ENCODE measurements at regions of chr20 and their contacts with region 1.

Region 1: GRCh38 chr20:46520976-46521579 is 7.7 kb upstream of the ZNF334 start:
- DNase-seq: peak; percentile 42
- H3K4me3 ChIP-seq: no peak overlapping the region
- H3K27ac ChIP-seq: no peak overlapping the region
- H3K4me1 ChIP-seq: no peaks in the 10 kb centered on the region
- H3K27me3 ChIP-seq: no peaks in the 10 kb centered on the region
- CTCF ChIP-seq: peak; percentile 65 to 89

Region 2: DNA sequence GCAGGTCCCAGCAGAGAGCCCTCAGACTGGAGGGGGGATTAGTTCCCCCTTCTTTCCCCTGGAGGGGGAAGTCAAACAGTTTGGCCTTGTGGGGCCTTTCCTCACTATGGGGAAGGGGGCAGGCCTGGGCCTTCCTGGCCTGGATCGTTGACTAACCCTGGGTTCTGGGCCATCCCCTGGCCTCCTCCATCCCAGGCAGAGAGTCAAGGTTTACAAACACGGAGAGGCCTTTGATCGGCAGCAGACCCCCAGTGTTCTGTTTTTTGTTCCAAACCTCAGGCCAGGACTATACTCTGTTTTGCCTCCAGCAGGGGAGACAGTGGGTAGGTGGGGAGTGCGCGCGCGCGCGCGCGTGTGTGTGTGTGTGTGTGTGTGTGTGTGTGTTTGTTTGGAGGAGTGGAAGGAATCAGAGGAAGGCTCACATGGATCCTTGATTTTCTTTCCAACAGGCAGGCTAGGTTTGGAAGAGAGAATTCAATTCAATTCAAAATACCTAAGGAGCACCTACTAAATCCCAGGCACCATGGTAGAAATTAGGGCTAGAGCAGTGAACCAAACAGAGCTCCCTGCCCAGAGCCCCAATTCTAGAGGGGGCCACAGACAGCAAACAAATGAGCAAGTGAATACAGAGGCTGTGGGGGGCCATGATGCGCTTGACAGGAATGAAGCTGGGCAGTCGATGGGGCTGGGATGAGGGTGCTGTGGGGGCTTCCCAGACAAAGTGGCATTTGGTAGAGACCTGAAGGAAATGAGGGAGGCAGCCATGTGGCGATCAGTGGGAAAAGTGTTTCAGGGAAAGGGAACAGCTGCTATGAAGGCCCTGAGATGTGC is 153.4 kb after region 1 on chr20:
- CTCF ChIA-PET with region 1: no interaction called
- dilution Hi-C with region 1: no loop called
- in situ Hi-C with region 1: loop called in 1 of 2 experiments (anchors 5 kb)
- intact Hi-C with region 1: no loop called
- DNase-seq: no peak
- H3K4me3 ChIP-seq: no peak overlapping the region
- H3K27ac ChIP-seq: no peak overlapping the region
- H3K4me1 ChIP-seq: no peaks in the 10 kb centered on the region
- H3K27me3 ChIP-seq: no peaks in the 10 kb centered on the region
- CTCF ChIP-seq: no peak

Region 3: DNA sequence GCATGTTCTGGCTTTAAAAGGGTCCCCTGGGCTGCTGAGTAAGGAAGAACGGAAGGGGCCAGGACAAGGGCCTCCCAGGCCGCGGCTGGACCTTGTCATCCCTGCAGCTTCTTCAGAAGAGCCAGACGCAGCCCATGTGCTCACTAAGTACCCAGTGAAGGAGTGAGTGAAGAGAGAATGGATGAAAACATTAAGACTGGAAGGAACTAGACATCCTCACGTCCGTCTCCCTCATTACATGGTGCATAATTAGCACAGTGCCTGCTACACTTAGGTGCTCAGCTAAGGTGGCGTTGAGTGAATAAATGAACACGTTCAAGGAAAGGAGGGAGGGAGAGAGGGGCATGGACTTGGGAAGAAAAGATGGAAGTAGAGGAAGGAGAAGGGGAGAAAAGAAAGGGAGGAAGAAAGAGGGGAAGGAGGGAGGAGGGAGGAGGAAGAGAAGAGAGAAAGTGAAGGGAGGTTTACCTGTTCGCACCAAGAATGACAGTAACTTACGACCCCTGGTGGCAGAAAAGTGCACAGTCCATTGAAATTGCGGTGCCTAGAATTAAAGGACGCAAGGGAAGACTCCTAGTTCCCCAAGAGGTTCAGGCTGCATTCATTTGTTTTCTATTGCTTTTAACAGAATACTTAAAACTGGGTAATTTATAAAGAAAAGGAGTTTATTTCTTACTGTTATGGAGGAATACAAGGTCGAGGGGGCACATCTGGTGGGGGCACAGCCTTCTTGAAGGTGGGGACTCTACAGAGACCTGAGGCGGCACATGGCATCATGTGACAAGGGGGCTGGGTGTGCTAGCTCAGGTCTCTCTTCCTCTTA is 160.2 kb after region 1 on chr20:
- CTCF ChIA-PET with region 1: interaction called, 12 read pairs
- dilution Hi-C with region 1: no loop called
- in situ Hi-C with region 1: loop called (anchors 5 kb)
- intact Hi-C with region 1: loop called (anchors 1 kb)
- DNase-seq: peak; percentile 48
- H3K4me3 ChIP-seq: no peak overlapping the region
- H3K27ac ChIP-seq: no peak overlapping the region
- H3K4me1 ChIP-seq: peaks cover 7% of the 10 kb centered on the region
- H3K27me3 ChIP-seq: no peaks in the 10 kb centered on the region
- CTCF ChIP-seq: peak; percentile 83 to 90

Region 4: GRCh38 chr20:46699651-46700359 is 178.7 kb after region 1 on chr20:
- CTCF ChIA-PET with region 1: no interaction called
- dilution Hi-C with region 1: no loop called
- in situ Hi-C with region 1: no loop called
- intact Hi-C with region 1: loop called (anchors 1 kb)
- DNase-seq: peak; percentile 33
- H3K4me3 ChIP-seq: no peak overlapping the region
- H3K27ac ChIP-seq: no peak overlapping the region
- H3K4me1 ChIP-seq: no peaks in the 10 kb centered on the region
- H3K27me3 ChIP-seq: no peaks in the 10 kb centered on the region
- CTCF ChIP-seq: peak; percentile 82 to 83

Region 5: GRCh38 chr20:46752728-46753127 is 231.7 kb after region 1 on chr20:
- CTCF ChIA-PET with region 1: no interaction called
- dilution Hi-C with region 1: no loop called
- in situ Hi-C with region 1: no loop called
- intact Hi-C with region 1: loop called (anchors 2 kb)
- DNase-seq: peak; percentile 16
- H3K4me3 ChIP-seq: no peak overlapping the region
- H3K27ac ChIP-seq: no peak overlapping the region
- H3K4me1 ChIP-seq: peaks cover under 1% of the 10 kb centered on the region
- H3K27me3 ChIP-seq: no peaks in the 10 kb centered on the region
- CTCF ChIP-seq: peak; percentile 69 to 78

Measured in mammary epithelial cell (primary cell).